Activated CD4-positive, alpha-beta memory T cell treated with anti-CD3 and anti-CD28 coated beads for 36 hours (primary cell): ENCODE measurements at regions of chr1 and their contacts with region 1.

Region 1: GRCh38 chr1:91165033-91165654 is 143.3 kb upstream of the ZNF644 start:
- DNase-seq: peak; percentile 83
- H3K4me3 Mint-ChIP-seq: no peak overlapping the region
- H3K27ac Mint-ChIP-seq: no peak overlapping the region
- H3K4me1 Mint-ChIP-seq: no peaks in the 10 kb centered on the region
- H3K27me3 Mint-ChIP-seq: no peaks in the 10 kb centered on the region

Region 2: DNA sequence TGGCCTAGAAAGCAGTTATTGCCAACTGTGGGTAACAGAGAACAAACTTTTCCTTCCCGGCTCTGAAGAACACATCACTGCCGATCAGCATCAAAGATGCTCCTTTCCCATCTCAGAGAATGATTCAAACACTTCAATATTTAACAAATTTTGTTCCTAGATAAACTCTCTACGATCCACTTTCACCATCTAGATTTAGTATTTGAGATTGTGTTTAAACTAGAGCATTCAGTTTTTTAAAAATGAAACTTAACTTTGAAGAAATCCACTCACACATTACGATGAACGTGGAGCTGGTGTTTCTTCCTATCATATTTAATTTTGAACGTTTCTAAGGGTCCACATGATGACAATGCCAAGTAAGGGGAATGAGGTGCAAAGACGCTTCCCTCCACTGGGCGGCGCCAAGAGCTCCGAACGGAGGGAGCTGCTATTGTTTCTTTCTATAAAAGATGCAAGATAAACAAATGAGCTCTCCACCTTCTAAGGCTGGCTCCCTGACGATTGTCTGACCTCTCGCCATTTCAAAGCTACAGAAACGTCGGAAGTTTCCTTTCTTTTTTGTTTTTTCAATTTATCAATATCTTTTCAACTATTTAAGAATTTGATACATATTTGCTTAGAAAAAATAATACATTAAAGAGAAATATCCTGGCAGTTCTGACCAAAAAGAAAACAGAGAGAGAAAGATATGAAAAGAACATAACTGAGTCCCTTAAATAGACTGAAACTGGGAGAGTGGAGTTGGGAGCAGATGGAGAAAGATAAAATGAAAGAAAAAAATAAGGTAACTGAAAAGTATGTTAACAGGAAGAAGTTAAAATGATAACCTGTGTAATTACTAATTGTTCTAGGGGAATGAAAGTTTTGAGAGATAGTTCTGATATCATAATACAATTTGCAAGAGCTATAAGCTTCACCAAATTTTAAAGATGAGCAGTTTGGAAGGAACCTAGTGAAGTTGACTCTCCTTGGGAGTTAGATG is 443.6 kb before region 1 on chr1:
- CTCF ChIA-PET with region 1: interaction called, 28 read pairs
- POLR2A ChIA-PET with region 1: no interaction called
- intact Hi-C with region 1: loop called (anchors 2 kb)
- DNase-seq: peak; percentile 71
- H3K4me3 Mint-ChIP-seq: no peak overlapping the region
- H3K27ac Mint-ChIP-seq: no peak overlapping the region
- H3K4me1 Mint-ChIP-seq: peaks cover 45% of the 10 kb centered on the region
- H3K27me3 Mint-ChIP-seq: peaks cover 83% of the 10 kb centered on the region

Region 3: DNA sequence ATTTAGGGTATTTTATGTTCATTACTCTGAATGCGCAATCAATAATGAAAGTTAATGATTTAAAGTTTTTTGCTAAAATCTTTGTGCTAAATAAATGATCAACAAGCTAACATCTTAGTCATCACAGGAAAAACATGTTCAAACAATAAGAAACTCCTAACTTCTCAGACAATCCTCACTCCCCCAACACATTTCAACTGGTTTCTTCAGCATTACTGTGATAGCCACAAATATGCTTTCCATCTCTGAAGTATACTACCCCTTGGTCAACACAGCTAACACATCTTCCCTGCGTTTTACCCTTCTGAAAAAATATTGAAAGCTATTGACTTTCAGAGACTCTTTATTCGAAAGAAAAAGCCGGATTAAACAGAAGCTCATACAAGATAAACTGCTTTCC is 229.1 kb before region 1 on chr1:
- CTCF ChIA-PET with region 1: interaction called, 10 read pairs
- POLR2A ChIA-PET with region 1: no interaction called
- intact Hi-C with region 1: no loop called
- DNase-seq: no peak
- H3K4me3 Mint-ChIP-seq: no peak overlapping the region
- H3K27ac Mint-ChIP-seq: no peak overlapping the region
- H3K4me1 Mint-ChIP-seq: peaks cover 51% of the 10 kb centered on the region
- H3K27me3 Mint-ChIP-seq: no peaks in the 10 kb centered on the region

Region 4: DNA sequence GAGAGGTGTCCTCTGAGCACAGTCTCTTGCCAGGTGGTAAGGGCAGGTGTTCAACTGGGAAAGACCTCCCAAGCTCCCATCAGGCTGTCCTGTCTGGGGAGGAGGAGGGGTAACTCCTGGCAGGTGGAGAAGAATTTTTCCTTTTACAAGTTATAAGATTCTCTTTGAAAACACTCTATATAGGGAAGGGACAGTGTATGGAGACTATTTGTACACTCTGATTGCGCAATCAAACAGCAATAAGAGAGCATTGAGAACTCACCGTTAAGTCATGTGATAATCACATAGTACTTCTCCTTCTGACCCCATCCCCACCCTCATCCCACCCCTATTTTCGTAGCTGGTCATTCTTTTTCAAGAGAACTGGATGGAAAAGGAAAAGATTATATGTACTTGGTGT is 36.0 kb after region 1 on chr1:
- CTCF ChIA-PET with region 1: interaction called, 12 read pairs
- POLR2A ChIA-PET with region 1: no interaction called
- intact Hi-C with region 1: no loop called
- DNase-seq: no peak
- H3K4me3 Mint-ChIP-seq: no peak overlapping the region
- H3K27ac Mint-ChIP-seq: no peak overlapping the region
- H3K4me1 Mint-ChIP-seq: no peaks in the 10 kb centered on the region
- H3K27me3 Mint-ChIP-seq: peaks cover 9% of the 10 kb centered on the region

Region 5: GRCh38 chr1:91404151-91405012 is 239.2 kb after region 1 on chr1 and contains the start of gene HFM1:
- CTCF ChIA-PET with region 1: interaction called, 3 read pairs
- POLR2A ChIA-PET with region 1: no interaction called
- intact Hi-C with region 1: loop called (anchors 1 kb)
- DNase-seq: peak; percentile 50
- H3K4me3 Mint-ChIP-seq: peak within 1 kb of the TSS; percentile 55
- H3K27ac Mint-ChIP-seq: no peak within 1 kb of the TSS
- H3K4me1 Mint-ChIP-seq: peaks cover 4% of the 10 kb centered on the region
- H3K27me3 Mint-ChIP-seq: peaks cover 37% of the 10 kb centered on the region
- total RNA-seq, gene HFM1: not detected

Region 6: DNA sequence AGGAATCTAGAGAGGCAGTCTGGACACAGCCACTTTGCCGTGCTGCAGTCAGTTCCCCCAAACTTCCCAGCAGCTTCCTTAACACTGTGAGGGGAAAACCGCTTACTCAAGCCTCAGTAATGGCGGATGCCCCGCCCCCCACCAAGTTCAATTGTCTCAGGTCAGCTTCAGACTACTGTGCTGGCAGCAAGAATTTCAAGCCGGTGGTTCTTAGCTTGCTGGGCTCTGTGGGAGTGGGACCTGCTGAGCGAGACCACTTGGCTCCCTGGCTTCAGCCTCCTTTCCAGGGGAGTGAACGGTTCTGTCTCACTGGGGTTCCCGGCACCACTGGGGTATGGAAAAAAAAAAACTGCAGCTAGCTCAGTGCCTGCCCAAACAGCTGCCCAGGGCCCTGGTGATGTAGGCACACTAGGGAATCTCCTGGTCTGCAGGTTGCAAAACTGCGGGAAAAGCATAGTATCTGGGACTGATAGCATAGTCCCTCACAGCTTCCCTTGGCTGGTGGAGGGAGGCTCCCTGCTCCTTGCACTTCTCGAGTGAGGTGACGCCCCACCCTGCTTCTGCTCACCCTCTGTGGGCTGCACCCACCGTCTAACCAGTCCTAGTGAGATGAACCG is 263.1 kb after region 1 on chr1:
- CTCF ChIA-PET with region 1: no interaction called
- POLR2A ChIA-PET with region 1: no interaction called
- intact Hi-C with region 1: no loop called
- DNase-seq: no peak
- H3K4me3 Mint-ChIP-seq: no peak overlapping the region
- H3K27ac Mint-ChIP-seq: no peak overlapping the region
- H3K4me1 Mint-ChIP-seq: no peaks in the 10 kb centered on the region
- H3K27me3 Mint-ChIP-seq: peaks cover 24% of the 10 kb centered on the region

Region 7: GRCh38 chr1:91673613-91674012 is 508.5 kb after region 1 on chr1:
- CTCF ChIA-PET with region 1: no interaction called
- POLR2A ChIA-PET with region 1: no interaction called
- intact Hi-C with region 1: no loop called
- DNase-seq: no peak
- H3K4me3 Mint-ChIP-seq: no peak overlapping the region
- H3K27ac Mint-ChIP-seq: no peak overlapping the region
- H3K4me1 Mint-ChIP-seq: peaks cover 37% of the 10 kb centered on the region
- H3K27me3 Mint-ChIP-seq: no peaks in the 10 kb centered on the region